Ascending aorta (tissue), 2 donors: ENCODE measurements at regions of chr5 and their contacts with region 1.

Region 1: GRCh38 chr5:42994246-42995151 is 45.6 kb downstream of the ANXA2R start:
- DNase-seq: peak in 1 of 2 donors; percentile 94
- H3K4me3 ChIP-seq: peak overlapping the region; percentile 52 to 72
- H3K27ac ChIP-seq: peak overlapping the region; percentile 90 to 97
- H3K4me1 ChIP-seq: peaks cover 0 to 4% of the 10 kb centered on the region in 2 donors
- H3K27me3 ChIP-seq: no peaks in the 10 kb centered on the region
- CTCF ChIP-seq: peak; percentile 84 to 88 (median 85)

Region 2: GRCh38 chr5:42908509-42909488 is 85.7 kb before region 1 on chr5:
- intact Hi-C with region 1: loop called (anchors 2 kb)
- DNase-seq: peak; percentile 50 to 94
- H3K4me3 ChIP-seq: peak overlapping the region; percentile 49 to 63
- H3K27ac ChIP-seq: no peak overlapping the region
- H3K4me1 ChIP-seq: peaks cover 0 to 5% of the 10 kb centered on the region in 2 donors
- H3K27me3 ChIP-seq: no peaks in the 10 kb centered on the region
- CTCF ChIP-seq: peak; percentile 76 to 87 (median 78)

Region 3: DNA sequence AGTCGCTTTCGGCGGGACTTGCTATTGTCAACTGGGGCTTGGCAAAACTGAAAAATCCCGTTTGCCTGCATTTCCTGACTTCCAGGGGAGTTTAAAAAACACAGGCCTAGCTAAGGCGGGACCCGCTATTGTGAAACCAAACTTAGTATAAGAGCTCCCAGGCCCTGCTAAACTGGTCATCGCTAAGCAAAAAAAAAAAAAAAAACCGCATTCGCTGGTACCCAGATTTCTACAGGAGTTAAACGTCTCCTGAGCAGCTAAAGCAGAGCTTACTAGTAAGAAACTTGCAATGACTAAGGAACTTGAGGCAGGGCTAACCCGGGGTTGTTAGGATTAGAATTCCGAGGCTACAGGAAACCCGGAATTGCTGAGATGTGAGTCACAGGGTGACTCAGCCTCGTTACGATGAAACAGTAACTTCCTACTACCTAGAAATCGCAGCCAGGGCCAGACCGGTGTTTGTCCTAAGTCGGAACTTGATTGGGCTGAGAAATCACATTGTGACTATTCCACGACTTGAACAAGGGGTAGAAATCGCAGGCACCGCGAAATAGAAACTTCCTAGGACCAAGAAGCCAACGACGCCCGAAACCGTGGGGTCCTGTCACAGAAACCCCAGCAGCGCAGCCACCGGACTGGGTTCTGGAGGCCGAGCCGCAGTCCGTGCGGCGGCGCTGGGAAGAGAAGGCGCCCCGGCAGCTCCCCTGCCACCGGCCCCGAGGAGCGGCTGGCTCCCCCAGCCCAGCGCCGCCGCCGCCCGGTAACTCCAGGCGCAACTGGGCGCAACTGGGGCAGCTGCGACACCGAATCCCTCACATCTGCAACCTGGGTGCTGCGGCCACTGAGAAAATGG is 43.8 kb before region 1 on chr5:
- intact Hi-C with region 1: loop called (anchors 1 kb)
- DNase-seq: peak; percentile 53 to 95
- H3K4me3 ChIP-seq: peak overlapping the region; percentile 61 to 88
- H3K27ac ChIP-seq: peak overlapping the region; percentile 96 to 97
- H3K4me1 ChIP-seq: peaks cover 7% of the 10 kb centered on the region in 2 donors
- H3K27me3 ChIP-seq: no peaks in the 10 kb centered on the region
- CTCF ChIP-seq: no peak

Region 4: DNA sequence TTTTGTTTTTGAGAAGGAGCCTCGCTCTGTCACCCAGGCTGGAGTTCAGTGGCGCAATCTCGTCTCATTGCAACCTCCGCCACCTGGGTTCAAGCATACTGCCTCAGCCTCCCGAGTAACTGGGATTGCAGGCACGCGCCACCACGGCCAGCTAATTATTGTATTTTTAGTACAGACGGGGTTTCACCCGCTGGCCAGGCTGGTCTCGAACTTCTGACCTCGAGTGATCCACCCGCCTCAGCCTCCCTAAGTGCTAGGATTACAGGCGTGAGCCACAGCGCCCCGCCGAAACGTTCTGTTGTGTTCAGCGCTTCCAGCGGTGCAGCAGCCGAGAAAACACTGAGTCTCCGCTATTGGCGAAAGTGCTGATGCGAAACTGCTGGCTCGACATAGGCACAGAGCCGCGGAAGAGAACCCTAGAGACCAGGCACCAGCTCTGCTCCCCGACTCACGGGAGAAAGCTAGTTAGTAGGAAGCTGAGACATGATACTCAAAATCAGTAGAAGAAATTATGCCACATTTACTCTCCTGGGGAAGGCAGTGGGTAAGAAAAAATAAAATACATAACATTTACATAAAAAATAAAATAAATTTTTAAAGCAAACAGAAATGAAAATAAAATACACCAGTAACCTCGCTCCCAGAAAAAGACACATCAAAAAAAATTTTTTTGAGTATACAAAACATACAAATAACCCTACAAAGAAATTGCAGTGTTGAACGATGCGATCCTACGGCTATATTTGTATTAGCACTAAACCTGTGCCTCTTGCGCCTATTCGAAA is 14.1 kb after region 1 on chr5:
- intact Hi-C with region 1: loop called (anchors 2 kb)
- DNase-seq: peak in 1 of 2 donors; percentile 86
- H3K4me3 ChIP-seq: peak overlapping the region; percentile 50 to 66
- H3K27ac ChIP-seq: peak overlapping the region; percentile 81 to 83
- H3K4me1 ChIP-seq: peaks cover 0 to 4% of the 10 kb centered on the region in 2 donors
- H3K27me3 ChIP-seq: no peaks in the 10 kb centered on the region
- CTCF ChIP-seq: no peak

Region 5: GRCh38 chr5:43019614-43020293 is 25.3 kb after region 1 on chr5:
- intact Hi-C with region 1: loop called (anchors 1 kb)
- DNase-seq: peak in 1 of 2 donors; percentile 83
- H3K4me3 ChIP-seq: peak overlapping the region; percentile 71 to 75
- H3K27ac ChIP-seq: peak overlapping the region; percentile 43 to 49
- H3K4me1 ChIP-seq: no peaks in the 10 kb centered on the region
- H3K27me3 ChIP-seq: no peaks in the 10 kb centered on the region
- CTCF ChIP-seq: peak in 2 of 3 experiments; percentile 19 to 34

Region 6: GRCh38 chr5:43085453-43085852 is 91.0 kb after region 1 on chr5:
- intact Hi-C with region 1: no loop called
- DNase-seq: no peak
- H3K4me3 ChIP-seq: no peak overlapping the region
- H3K27ac ChIP-seq: no peak overlapping the region
- H3K4me1 ChIP-seq: no peaks in the 10 kb centered on the region
- H3K27me3 ChIP-seq: no peaks in the 10 kb centered on the region
- CTCF ChIP-seq: no peak

Region 7: DNA sequence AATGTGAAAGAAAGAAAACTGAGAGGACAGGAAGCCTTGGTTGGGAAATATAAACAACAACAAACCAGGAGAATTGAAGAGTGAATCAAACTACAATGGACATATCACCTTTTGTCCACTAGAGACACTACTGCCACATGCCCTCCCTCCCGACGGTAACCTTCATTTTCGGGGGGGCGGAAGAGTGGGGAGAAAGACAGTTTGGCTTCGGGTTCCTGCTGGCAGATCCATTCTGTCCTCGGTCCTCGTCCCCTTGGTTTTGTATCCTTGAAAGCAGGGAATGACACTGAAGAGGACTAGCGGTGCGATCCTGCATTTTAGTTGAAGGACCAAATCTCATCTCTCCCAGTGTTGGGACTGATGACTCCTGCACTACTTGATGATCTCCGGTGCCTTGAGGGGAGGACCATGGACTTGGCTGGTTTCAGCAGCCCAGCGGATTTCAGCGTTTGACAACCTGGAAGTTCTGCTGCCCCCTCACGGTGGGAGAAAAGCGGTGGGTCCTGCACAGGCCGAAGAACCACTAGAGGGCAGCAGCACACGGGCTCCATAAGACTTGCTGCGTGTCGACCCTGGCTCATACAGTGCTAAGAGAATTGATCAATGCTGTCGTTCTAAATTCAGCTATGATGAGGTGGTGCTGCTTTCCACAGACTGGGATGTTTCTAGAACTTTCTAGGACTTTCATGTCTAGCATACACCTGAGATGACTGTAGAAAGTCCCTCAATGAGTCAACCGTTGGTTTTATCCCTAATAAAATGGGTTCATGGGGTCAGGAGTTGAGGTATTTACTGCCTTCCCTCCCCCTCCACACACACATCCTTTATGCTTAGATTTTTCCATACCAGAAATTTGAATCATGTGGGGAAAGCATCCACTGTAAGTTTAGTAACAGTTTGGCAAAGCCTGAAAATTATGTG is 111.1 kb after region 1 on chr5:
- intact Hi-C with region 1: loop called (anchors 2 kb)
- DNase-seq: peak; percentile 61 to 93
- H3K4me3 ChIP-seq: peak overlapping the region; percentile 46 to 54
- H3K27ac ChIP-seq: no peak overlapping the region
- H3K4me1 ChIP-seq: no peaks in the 10 kb centered on the region
- H3K27me3 ChIP-seq: no peaks in the 10 kb centered on the region
- CTCF ChIP-seq: peak; percentile 97 to 99 (median 97)

Region 8: DNA sequence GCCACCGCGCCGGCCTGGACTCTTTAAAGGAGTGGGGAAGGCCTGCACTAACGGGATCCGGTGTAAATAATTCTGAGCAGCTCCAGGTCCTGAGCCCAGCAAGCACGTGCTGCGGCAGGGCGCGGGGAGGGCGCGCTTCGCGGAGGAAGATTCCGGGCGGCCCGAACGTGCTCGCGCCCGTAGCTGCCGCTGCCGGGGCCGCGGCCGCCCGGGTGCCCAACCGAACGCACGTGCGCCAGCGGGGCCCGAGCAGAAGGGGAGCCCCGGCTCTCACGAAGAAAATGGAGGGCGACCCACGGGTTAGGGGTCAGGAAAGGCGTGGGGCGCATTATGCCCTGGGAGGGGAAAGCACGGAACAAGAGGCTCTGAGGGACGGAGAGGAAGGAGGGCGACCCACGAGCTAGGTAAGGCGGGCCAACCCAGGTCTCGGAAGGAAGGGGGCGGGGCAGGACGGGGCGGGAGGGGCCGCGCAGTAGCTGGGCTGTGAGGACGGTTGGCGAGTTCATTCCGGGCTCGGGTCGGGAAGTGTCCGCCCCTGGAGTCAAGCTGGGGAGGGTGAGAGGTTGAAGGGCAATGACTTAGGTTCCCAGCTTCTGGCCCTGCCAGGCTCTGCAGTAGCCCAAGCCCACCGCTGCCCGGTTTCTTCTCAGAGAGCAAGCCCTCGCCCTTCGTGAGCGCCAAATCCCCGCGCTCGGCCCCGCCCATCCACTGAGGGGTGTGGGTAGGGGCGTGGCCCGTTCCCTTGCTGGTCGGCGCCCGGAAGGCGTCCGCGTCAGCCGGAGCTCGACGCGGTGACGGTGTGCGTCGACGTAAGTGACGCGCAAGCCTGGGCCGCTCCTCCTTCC is 126.4 kb after region 1 on chr5 and contains the start of gene ZNF131:
- intact Hi-C with region 1: loop called (anchors 2 kb)
- DNase-seq: peak; percentile 84 to 98
- H3K4me3 ChIP-seq: peak within 1 kb of the TSS; percentile 85 to 87
- H3K27ac ChIP-seq: peak within 1 kb of the TSS; percentile 90 to 99
- H3K4me1 ChIP-seq: peaks cover 0 to 20% of the 10 kb centered on the region in 2 donors
- H3K27me3 ChIP-seq: no peaks in the 10 kb centered on the region
- CTCF ChIP-seq: peak in 1 of 3 experiments; percentile 19
- total RNA-seq, gene ZNF131: 61.2 TPM

Region 9: DNA sequence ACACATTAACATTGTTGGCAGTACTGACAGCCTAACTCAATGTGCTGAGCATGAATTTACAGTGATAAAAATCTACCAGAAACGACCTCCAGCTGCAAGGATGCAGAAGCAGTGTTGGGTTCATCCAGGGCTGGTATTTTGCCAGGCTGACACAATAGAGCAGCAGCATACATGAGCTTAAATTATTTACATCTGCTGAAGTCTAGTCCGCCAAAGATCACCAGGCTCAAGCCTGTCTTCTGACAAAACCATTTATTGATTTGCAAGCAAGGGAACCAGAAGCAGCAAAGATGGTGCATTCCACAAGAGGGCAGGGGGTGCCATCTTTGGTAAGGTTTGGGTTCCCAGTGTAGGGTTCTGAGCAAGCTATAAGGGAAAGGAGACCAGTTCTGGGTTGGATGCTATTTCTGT is 529.2 kb after region 1 on chr5:
- intact Hi-C with region 1: no loop called
- DNase-seq: no peak
- H3K4me3 ChIP-seq: no peak overlapping the region
- H3K27ac ChIP-seq: no peak overlapping the region
- H3K4me1 ChIP-seq: no peaks in the 10 kb centered on the region
- H3K27me3 ChIP-seq: no peaks in the 10 kb centered on the region
- CTCF ChIP-seq: no peak